IMR-90 (cell line): ENCODE measurements at regions of chr16 and their contacts with region 1.

Region 1: GRCh38 chr16:13510425-13511151 is 409.4 kb upstream of the ERCC4 start:
- DNase-seq: no peak
- ATAC-seq: no peak
- H3K4me3 ChIP-seq: no peak overlapping the region
- H3K27ac ChIP-seq: no peak overlapping the region
- H3K4me1 ChIP-seq: no peaks in the 10 kb centered on the region
- H3K27me3 ChIP-seq: no peaks in the 10 kb centered on the region
- CTCF ChIP-seq: no peak
- POLR2A ChIP-seq: no peak
- RAD21 ChIP-seq: no peak

Region 2: GRCh38 chr16:14042706-14043105 is 532.1 kb after region 1 on chr16:
- CTCF ChIA-PET with region 1: no interaction called
- POLR2A ChIA-PET with region 1: interaction called, 20 read pairs
- dilution Hi-C with region 1: no loop called
- in situ Hi-C with region 1: no loop called
- intact Hi-C with region 1: no loop called
- DNase-seq: no peak
- ATAC-seq: no peak
- H3K4me3 ChIP-seq: no peak overlapping the region
- H3K27ac ChIP-seq: no peak overlapping the region
- H3K4me1 ChIP-seq: no peaks in the 10 kb centered on the region
- H3K27me3 ChIP-seq: peaks cover 10% of the 10 kb centered on the region
- CTCF ChIP-seq: no peak
- POLR2A ChIP-seq: no peak
- RAD21 ChIP-seq: no peak